Activated B cell treated with CpG ODN at 0.5 μM for 24 hours (primary cell): ENCODE measurements at regions of chr3 and their contacts with region 1.

Region 1: GRCh38 chr3:119463171-119464169 is at the start of gene TMEM39A:
- DNase-seq: peak; percentile 99
- ATAC-seq: peak; percentile 88
- H3K4me3 Mint-ChIP-seq: peak within 1 kb of the TSS; percentile 98
- H3K27ac Mint-ChIP-seq: peak within 1 kb of the TSS; percentile 97
- H3K4me1 Mint-ChIP-seq: peaks cover 34% of the 10 kb centered on the region
- H3K27me3 Mint-ChIP-seq: no peaks in the 10 kb centered on the region
- CTCF ChIP-seq: no peak
- total RNA-seq, gene TMEM39A: 33.7 and 45.6 TPM in 2 replicates

Region 2: GRCh38 chr3:119279101-119279554 is 184.3 kb before region 1 on chr3:
- CTCF ChIA-PET with region 1: interaction called, 5 read pairs
- POLR2A ChIA-PET with region 1: no interaction called
- intact Hi-C with region 1: loop called (anchors 2 kb)
- DNase-seq: no peak
- ATAC-seq: no peak
- H3K4me3 Mint-ChIP-seq: no peak overlapping the region
- H3K27ac Mint-ChIP-seq: no peak overlapping the region
- H3K4me1 Mint-ChIP-seq: peaks cover 3% of the 10 kb centered on the region
- H3K27me3 Mint-ChIP-seq: no peaks in the 10 kb centered on the region
- CTCF ChIP-seq: no peak

Region 3: DNA sequence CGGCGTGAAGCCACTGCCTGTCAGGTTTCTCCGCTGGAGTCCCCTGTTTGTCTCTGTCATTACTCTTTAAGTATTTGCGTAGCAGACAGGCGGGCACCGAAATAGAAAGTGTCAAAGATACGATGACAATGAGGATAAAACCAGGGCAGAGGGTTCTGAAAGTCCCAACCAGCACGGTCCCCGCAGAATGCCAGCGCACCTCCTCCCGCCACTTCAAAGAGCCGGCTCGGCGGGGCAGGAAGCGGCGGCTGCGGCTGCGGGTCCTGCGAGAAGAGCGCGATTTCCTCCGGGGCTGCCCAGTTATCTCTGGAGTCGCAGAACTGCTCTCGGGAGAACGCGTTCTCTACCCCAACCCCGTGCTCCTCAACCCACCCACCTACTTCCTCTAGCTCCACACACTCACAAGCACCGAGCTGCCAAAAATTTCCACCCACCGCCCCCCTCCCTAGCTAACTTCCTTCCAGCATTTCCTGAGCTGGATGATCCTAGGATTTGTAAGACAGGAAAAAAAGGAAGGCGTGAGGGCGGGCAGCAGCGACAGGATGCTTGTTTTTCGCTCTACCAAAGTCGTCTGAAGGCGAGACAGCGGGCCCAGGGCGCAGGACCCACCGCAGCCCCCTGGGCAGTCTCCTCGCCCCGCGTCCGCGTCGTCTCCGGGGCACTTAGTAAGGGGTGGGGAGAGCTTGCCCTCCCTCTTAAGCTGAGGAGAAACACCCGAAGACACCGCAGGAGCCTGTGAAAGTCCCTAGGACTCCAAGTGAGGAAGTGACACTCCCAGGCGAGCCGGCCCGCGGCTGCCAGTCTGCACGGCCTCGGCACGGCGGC is 169.4 kb before region 1 on chr3 and contains the start of gene ARHGAP31:
- CTCF ChIA-PET with region 1: no interaction called
- POLR2A ChIA-PET with region 1: interaction called, 11 read pairs
- intact Hi-C with region 1: loop called (anchors 2 kb)
- DNase-seq: peak; percentile 56
- ATAC-seq: peak; percentile 73
- H3K4me3 Mint-ChIP-seq: peak within 1 kb of the TSS; percentile 88
- H3K27ac Mint-ChIP-seq: peak within 1 kb of the TSS; percentile 90
- H3K4me1 Mint-ChIP-seq: peaks cover 61% of the 10 kb centered on the region
- H3K27me3 Mint-ChIP-seq: no peaks in the 10 kb centered on the region
- CTCF ChIP-seq: no peak
- total RNA-seq, gene ARHGAP31: 23.7 and 26.0 TPM in 2 replicates

Region 4: DNA sequence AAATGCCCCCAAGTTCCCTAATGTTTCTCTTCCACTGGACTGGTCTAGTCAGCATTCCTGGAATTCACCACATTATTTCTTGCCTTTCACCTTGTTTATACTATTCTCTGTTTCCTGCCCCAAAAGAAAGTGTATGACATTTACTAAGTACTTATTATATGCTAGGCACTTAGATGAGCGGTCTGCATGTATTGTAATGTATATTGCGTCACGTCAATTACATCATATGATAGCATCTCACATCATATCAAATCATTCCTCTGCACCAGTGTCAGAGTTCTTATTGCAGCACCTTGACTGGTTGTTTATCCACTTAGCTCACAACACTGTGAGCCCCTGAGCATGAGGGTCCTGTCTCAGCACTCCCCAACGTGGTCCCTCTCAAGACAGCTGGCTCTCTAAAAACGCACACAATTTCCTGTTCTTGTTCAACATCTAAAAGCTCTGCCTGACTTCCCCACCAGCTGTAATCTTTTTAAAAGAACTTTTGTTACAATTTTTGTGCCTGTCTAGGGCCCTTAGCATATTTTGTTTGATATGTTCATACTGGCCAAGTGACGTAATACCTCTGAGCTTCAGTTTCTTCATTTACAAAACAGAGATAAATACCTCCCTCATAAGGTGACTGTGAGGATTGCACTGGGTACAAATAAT is 110.5 kb before region 1 on chr3:
- CTCF ChIA-PET with region 1: no interaction called
- POLR2A ChIA-PET with region 1: interaction called, 11 read pairs
- intact Hi-C with region 1: loop called (anchors 1 kb)
- DNase-seq: no peak
- ATAC-seq: peak; percentile 46
- H3K4me3 Mint-ChIP-seq: peak overlapping the region; percentile 41
- H3K27ac Mint-ChIP-seq: peak overlapping the region; percentile 47
- H3K4me1 Mint-ChIP-seq: peaks cover 47% of the 10 kb centered on the region
- H3K27me3 Mint-ChIP-seq: no peaks in the 10 kb centered on the region
- CTCF ChIP-seq: no peak

Region 5: DNA sequence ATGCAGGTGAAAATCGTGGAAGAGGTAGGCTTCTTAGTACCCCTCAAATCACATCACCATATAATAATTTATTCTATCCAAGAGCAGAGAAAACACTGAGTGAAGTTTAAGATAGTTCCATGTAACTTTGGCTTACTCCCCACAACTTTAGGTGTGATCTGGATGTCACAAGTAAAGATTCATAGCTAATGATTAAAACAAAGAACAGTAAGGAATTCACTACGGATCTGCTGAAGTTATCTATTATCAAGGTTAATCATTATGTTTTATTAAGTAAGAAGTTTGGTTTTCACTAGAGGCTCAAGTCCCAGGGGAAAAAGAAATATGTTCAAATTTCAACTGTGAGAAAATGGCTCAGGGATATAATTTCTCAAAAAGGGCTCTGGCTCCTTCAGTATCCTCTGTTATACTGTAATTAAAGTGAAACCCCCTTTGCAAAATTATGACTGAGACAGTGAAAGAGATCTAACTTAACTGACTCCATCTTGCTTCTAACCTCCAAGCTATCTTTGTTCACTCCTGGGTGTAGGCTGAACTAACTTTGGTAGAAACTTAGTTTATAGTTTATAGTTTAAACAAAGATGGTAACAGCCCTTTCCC is 78.8 kb after region 1 on chr3:
- CTCF ChIA-PET with region 1: no interaction called
- POLR2A ChIA-PET with region 1: interaction called, 11 read pairs
- intact Hi-C with region 1: no loop called
- DNase-seq: no peak
- ATAC-seq: no peak
- H3K4me3 Mint-ChIP-seq: peak overlapping the region; percentile 33
- H3K27ac Mint-ChIP-seq: peak overlapping the region; percentile 77
- H3K4me1 Mint-ChIP-seq: peaks cover 79% of the 10 kb centered on the region
- H3K27me3 Mint-ChIP-seq: no peaks in the 10 kb centered on the region
- CTCF ChIP-seq: no peak

Region 6: DNA sequence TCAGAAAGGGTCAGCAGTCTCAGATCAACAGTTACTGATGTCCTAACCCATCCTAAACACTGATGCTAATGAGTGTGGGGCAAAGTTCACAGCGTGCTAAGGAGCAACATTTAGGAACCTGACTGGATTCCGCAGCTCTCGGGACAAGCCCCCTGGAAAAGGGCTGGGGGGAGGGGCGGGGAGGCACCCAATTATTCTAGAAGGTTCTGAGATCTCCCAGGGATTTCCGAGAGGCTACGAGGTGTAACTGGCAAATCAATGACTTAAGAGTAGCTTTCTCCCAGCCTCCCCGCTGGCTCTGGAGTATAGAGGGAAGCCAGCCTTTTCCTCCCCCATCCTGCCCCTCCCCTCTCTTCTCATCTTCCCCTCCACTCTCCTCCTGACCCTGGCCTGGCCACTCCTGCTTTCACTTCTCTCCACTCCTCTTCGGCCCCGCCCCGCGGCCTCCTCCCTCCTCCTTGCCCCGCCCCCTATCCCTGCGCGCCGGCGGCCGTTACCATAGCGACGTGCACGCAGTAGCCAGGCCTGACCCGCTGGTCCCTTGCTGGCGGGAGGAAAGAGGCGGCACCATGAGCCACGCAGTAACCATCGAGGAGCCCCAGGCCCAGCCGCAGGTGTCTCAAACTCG is 239.2 kb after region 1 on chr3 and contains the start of gene CFAP91:
- CTCF ChIA-PET with region 1: no interaction called
- POLR2A ChIA-PET with region 1: interaction called, 7 read pairs
- intact Hi-C with region 1: loop called (anchors 1 kb)
- DNase-seq: peak; percentile 86
- ATAC-seq: peak; percentile 92
- H3K4me3 Mint-ChIP-seq: peak within 1 kb of the TSS; percentile 86
- H3K27ac Mint-ChIP-seq: peak within 1 kb of the TSS; percentile 72
- H3K4me1 Mint-ChIP-seq: peaks cover 52% of the 10 kb centered on the region
- H3K27me3 Mint-ChIP-seq: no peaks in the 10 kb centered on the region
- CTCF ChIP-seq: no peak
- total RNA-seq, gene CFAP91: 8.5 and 12.9 TPM in 2 replicates